CD4-positive, alpha-beta T cell (primary cell): ENCODE measurements at regions of chr15 and their contacts with region 1.

Region 1: GRCh38 chr15:90233376-90234095 is at the start of gene CIB1:
- DNase-seq: peak; percentile 17 to 98 (median 96)
- ATAC-seq: peak; percentile 69
- H3K4me3 ChIP-seq: peak within 1 kb of the TSS; percentile 89
- H3K4me3 Mint-ChIP-seq: peak within 1 kb of the TSS; percentile 93
- H3K27ac ChIP-seq: peak within 1 kb of the TSS; percentile 97 to 99
- H3K27ac Mint-ChIP-seq: peak within 1 kb of the TSS; percentile 99
- H3K4me1 ChIP-seq: peaks cover 60% of the 10 kb centered on the region
- H3K4me1 Mint-ChIP-seq: peaks cover 56% of the 10 kb centered on the region
- H3K27me3 ChIP-seq: no peaks in the 10 kb centered on the region
- H3K27me3 Mint-ChIP-seq: no peaks in the 10 kb centered on the region
- CTCF ChIP-seq: peak; percentile 34
- total RNA-seq, gene CIB1: 279 to 295 TPM

Region 2: DNA sequence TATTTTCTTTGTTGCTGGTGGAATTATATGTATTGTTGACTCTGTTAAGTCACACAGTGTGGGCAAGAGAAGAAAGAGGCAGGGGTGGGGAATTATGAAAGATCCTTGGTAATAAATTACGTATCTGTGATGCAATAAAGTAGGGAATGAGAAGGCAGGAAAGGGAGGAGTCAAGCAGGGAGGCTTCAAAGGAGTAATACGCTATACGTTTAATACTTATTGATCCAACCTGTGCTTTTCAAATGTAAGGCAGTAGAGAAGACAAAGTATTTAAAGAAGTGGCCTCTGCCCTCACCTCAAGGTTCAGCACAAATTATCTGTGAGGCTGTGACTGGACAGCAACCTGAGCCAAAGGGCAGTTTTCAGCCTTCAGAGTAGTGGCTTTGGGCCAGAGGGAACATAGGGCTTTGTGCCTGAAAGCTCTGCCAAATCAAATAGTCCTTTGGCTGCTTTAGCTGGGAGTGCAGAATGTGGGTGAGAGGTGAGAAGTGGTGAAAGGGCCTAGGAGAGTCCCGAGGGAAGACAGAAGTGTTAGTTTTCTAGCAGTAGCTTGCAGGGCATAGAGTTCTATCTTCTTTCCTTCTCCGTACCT is 553.2 kb before region 1 on chr15:
- CTCF ChIA-PET with region 1: no interaction called
- POLR2A ChIA-PET with region 1: no interaction called
- intact Hi-C with region 1: no loop called
- DNase-seq: no peak
- ATAC-seq: no peak
- H3K4me3 ChIP-seq: no peak overlapping the region
- H3K4me3 Mint-ChIP-seq: no peak overlapping the region
- H3K27ac ChIP-seq: no peak overlapping the region
- H3K27ac Mint-ChIP-seq: no peak overlapping the region
- H3K4me1 ChIP-seq: no peaks in the 10 kb centered on the region
- H3K4me1 Mint-ChIP-seq: no peaks in the 10 kb centered on the region
- H3K27me3 ChIP-seq: no peaks in the 10 kb centered on the region
- H3K27me3 Mint-ChIP-seq: no peaks in the 10 kb centered on the region
- CTCF ChIP-seq: no peak

Region 3: GRCh38 chr15:90101969-90102890 is 131.3 kb before region 1 on chr15 and contains the start of gene IDH2:
- CTCF ChIA-PET with region 1: no interaction called
- POLR2A ChIA-PET with region 1: interaction called, 16 read pairs
- intact Hi-C with region 1: loop called in 1 of 2 experiments (anchors 5 kb)
- DNase-seq: peak; percentile 37 to 89 (median 63)
- ATAC-seq: peak; percentile 68
- H3K4me3 ChIP-seq: peak within 1 kb of the TSS; percentile 75
- H3K4me3 Mint-ChIP-seq: peak within 1 kb of the TSS; percentile 90
- H3K27ac ChIP-seq: peak within 1 kb of the TSS; percentile 84 to 86
- H3K27ac Mint-ChIP-seq: peak within 1 kb of the TSS; percentile 88
- H3K4me1 ChIP-seq: peaks cover 48% of the 10 kb centered on the region
- H3K4me1 Mint-ChIP-seq: peaks cover 58% of the 10 kb centered on the region
- H3K27me3 ChIP-seq: no peaks in the 10 kb centered on the region
- H3K27me3 Mint-ChIP-seq: no peaks in the 10 kb centered on the region
- CTCF ChIP-seq: no peak
- total RNA-seq, gene IDH2: 38.0 to 38.2 TPM

Region 4: DNA sequence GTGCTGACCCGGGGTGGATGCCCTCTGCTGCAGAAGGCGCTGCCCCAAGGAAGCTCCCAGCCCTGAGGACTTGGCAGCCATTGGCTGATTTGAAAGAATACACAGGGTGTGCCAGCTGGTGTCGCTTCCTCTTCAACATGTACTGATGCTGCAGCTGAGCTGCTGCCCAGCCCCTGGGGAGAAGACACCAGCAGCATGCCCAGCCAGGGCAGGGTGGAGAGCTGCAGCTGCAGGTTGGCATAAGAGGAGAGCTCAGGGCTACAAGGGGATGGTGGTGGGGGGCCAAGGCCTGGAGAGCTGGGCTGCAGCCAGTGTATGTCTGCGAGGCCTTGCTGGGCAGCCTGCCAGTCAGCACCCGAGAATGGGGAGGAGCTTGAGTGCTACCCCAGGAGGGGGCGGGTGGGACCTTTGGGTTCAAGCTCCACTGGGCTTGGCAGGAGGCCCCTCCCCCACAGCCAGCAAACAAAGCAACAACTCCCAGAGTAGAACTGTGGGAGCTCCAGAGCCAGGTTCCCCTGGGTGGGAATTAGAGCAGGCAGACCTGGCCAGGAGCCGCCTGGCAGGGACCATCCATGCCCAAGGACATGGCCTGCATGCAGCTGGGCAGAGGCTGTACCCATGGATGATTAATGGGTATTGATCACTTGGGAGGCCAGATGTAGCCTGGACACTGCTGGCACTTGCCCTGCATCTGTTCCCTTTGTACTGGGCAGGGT is 41.6 kb before region 1 on chr15:
- CTCF ChIA-PET with region 1: no interaction called
- POLR2A ChIA-PET with region 1: interaction called, 30 read pairs
- intact Hi-C with region 1: loop called in 1 of 2 experiments (anchors 5 kb)
- DNase-seq: peak in 12 of 14 experiments; percentile 17 to 63 (median 38)
- ATAC-seq: peak; percentile 82
- H3K4me3 ChIP-seq: peak overlapping the region; percentile 26
- H3K4me3 Mint-ChIP-seq: peak overlapping the region; percentile 89
- H3K27ac ChIP-seq: no peak overlapping the region
- H3K27ac Mint-ChIP-seq: peak overlapping the region; percentile 84
- H3K4me1 ChIP-seq: peaks cover 29% of the 10 kb centered on the region
- H3K4me1 Mint-ChIP-seq: peaks cover 30% of the 10 kb centered on the region
- H3K27me3 ChIP-seq: no peaks in the 10 kb centered on the region
- H3K27me3 Mint-ChIP-seq: no peaks in the 10 kb centered on the region
- CTCF ChIP-seq: no peak

Region 5: GRCh38 chr15:90221246-90221900 is 12.2 kb before region 1 on chr15:
- CTCF ChIA-PET with region 1: interaction called, 3 read pairs
- POLR2A ChIA-PET with region 1: interaction called, 18 read pairs
- intact Hi-C with region 1: no loop called
- DNase-seq: peak in 5 of 14 experiments; percentile 28 to 57 (median 41)
- ATAC-seq: peak; percentile 40
- H3K4me3 ChIP-seq: no peak overlapping the region
- H3K4me3 Mint-ChIP-seq: no peak overlapping the region
- H3K27ac ChIP-seq: no peak overlapping the region
- H3K27ac Mint-ChIP-seq: no peak overlapping the region
- H3K4me1 ChIP-seq: peaks cover 6% of the 10 kb centered on the region
- H3K4me1 Mint-ChIP-seq: peaks cover 13% of the 10 kb centered on the region
- H3K27me3 ChIP-seq: no peaks in the 10 kb centered on the region
- H3K27me3 Mint-ChIP-seq: no peaks in the 10 kb centered on the region
- CTCF ChIP-seq: no peak

Region 6: DNA sequence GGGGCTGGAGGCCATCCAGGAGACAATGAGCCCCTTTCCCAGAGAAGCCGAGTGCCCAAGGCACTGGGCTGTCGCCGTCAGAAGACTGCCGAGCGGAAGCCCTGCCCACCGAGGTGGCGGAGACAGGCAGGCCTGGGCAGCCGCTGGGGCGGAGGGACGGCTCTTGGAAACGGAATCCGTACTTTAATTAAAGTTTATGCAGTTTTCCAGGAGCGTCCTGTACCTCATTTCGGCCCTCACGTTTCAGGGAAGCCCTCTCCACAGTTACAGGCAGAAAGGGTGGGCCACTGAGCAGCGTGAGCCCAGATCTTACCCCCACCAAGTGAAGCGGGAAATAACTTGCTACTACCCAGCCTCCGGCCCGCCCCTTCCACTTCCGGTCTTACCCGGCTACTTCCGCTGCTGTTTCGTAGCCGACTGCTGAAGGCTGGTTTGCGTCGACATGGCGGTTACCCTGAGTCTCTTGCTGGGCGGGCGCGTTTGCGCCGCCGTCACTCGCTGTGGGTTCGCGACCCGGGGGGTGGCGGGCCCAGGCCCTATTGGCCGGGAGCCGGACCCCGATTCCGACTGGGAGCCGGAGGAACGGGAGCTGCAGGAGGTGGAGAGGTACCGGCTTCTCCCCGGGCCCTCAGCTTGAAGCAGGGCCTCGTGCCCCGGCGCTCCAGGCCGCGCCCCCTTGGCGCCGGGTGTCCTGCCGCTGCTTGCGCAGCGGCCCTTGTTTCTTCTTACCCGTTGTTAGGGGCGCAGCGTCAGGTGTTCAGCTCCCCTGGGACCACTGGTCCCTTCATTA is 31.9 kb after region 1 on chr15 and contains the start of gene NGRN:
- CTCF ChIA-PET with region 1: interaction called, 6 read pairs
- POLR2A ChIA-PET with region 1: interaction called, 79 read pairs
- intact Hi-C with region 1: loop called (anchors 1 kb)
- DNase-seq: peak; percentile 83 to 95 (median 90)
- ATAC-seq: peak; percentile 79
- H3K4me3 ChIP-seq: peak within 1 kb of the TSS; percentile 74
- H3K4me3 Mint-ChIP-seq: peak within 1 kb of the TSS; percentile 90
- H3K27ac ChIP-seq: peak within 1 kb of the TSS; percentile 94 to 97
- H3K27ac Mint-ChIP-seq: peak within 1 kb of the TSS; percentile 98
- H3K4me1 ChIP-seq: peaks cover 48% of the 10 kb centered on the region
- H3K4me1 Mint-ChIP-seq: peaks cover 57% of the 10 kb centered on the region
- H3K27me3 ChIP-seq: no peaks in the 10 kb centered on the region
- H3K27me3 Mint-ChIP-seq: no peaks in the 10 kb centered on the region
- CTCF ChIP-seq: no peak
- total RNA-seq, gene NGRN: 55.7 to 58.4 TPM

Region 7: DNA sequence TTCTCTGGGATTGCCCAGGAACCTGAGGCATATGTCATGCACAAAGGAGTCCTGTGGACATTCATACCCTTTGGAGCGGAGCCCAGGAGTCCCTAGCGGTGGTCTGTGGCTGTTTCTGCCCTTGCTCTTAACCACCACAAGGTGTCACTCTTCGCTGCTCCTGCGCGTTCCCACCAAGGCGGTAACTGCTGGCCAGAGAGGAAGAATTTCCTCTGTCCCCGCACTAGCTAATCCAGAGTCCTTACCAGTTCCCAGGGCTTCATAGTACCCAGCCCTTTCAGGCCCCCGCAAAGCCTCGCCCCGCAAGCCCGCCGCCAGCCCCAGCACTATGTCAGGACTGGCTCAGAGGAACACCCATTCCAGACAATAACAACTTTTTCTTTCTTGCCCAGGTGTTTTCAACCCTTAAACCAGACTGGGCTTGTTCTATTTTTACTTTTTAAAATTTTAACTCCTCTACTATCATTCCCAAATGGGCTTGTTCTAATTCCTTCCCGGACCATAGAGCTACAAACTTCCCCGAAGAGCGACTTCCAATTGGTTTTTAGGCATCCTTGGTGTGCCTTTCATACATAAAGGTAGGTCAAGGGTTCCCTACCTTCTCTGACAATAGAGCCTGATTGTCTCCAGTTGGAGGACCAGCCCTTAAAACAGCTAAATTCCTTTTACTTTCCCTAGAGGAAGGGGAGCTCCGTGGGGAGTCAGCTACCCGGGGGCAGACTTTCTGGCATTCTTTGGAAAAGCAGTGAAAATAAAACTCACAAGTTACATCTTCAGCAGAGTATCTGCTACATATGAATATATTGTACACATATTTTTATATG is 86.7 kb after region 1 on chr15:
- CTCF ChIA-PET with region 1: no interaction called
- POLR2A ChIA-PET with region 1: no interaction called
- intact Hi-C with region 1: no loop called
- DNase-seq: peak; percentile 43 to 87 (median 56)
- ATAC-seq: peak; percentile 96
- H3K4me3 ChIP-seq: no peak overlapping the region
- H3K4me3 Mint-ChIP-seq: no peak overlapping the region
- H3K27ac ChIP-seq: no peak overlapping the region
- H3K27ac Mint-ChIP-seq: no peak overlapping the region
- H3K4me1 ChIP-seq: peaks cover 7% of the 10 kb centered on the region
- H3K4me1 Mint-ChIP-seq: peaks cover 9% of the 10 kb centered on the region
- H3K27me3 ChIP-seq: no peaks in the 10 kb centered on the region
- H3K27me3 Mint-ChIP-seq: no peaks in the 10 kb centered on the region
- CTCF ChIP-seq: peak; percentile 96

Region 8: DNA sequence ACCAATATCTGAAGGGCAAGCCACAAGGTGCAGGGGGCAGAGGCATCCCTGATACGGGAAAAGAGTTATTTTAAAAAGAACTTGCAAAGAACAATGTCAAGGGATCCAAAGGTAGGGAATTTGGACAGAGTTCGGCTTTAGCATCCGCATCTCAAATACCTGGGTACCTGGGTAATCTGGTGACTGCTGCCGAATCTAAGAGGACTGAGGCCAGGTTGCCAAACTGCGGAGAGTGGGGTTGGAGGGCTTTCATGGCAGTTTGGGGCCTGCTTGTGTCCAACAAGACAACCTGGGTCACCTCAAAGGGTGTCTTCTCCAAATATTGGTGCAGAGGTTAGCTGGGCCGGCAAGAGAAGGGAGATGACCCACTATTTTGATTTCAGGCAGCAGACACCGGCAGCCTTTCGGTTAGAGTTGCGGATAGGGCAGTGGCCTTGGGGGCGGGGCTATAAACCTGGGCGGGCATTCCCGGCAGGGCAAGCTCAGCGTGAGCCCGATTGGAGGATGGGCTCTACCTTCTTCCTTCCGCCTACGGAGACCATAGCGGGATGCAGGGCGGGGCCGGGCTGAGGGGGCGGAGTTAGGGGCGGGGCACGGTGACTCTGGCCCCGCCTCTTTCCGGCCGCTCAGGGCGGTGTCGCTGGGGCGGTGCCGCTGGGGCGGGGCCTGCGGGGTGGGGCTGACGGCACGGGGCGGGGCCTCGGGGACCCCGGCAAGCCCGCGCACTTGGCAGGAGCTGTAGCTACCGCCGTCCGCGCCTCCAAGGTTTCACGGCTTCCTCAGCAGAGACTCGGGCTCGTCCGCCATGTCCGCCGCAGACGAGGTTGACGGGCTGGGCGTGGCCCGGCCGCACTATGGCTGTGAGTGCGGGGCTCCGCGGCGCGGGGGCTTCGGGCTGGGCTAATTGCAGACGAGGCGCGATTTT is 154.3 kb after region 1 on chr15 and contains the start of gene IQGAP1:
- CTCF ChIA-PET with region 1: no interaction called
- POLR2A ChIA-PET with region 1: interaction called, 10 read pairs
- intact Hi-C with region 1: loop called in 1 of 2 experiments (anchors 5 kb)
- DNase-seq: peak; percentile 91 to 98 (median 96)
- ATAC-seq: peak; percentile 88
- H3K4me3 ChIP-seq: peak within 1 kb of the TSS; percentile 89
- H3K4me3 Mint-ChIP-seq: peak within 1 kb of the TSS; percentile 95
- H3K27ac ChIP-seq: peak within 1 kb of the TSS; percentile 73 to 75
- H3K27ac Mint-ChIP-seq: peak within 1 kb of the TSS; percentile 95
- H3K4me1 ChIP-seq: peaks cover 38% of the 10 kb centered on the region
- H3K4me1 Mint-ChIP-seq: peaks cover 51% of the 10 kb centered on the region
- H3K27me3 ChIP-seq: no peaks in the 10 kb centered on the region
- H3K27me3 Mint-ChIP-seq: no peaks in the 10 kb centered on the region
- CTCF ChIP-seq: no peak
- total RNA-seq, gene IQGAP1: 76.8 to 78.7 TPM